Activated CD4-positive, alpha-beta memory T cell treated with anti-CD3 and anti-CD28 coated beads for 36 hours (primary cell): ENCODE measurements at regions of chr22 and their contacts with region 1.

Region 1: DNA sequence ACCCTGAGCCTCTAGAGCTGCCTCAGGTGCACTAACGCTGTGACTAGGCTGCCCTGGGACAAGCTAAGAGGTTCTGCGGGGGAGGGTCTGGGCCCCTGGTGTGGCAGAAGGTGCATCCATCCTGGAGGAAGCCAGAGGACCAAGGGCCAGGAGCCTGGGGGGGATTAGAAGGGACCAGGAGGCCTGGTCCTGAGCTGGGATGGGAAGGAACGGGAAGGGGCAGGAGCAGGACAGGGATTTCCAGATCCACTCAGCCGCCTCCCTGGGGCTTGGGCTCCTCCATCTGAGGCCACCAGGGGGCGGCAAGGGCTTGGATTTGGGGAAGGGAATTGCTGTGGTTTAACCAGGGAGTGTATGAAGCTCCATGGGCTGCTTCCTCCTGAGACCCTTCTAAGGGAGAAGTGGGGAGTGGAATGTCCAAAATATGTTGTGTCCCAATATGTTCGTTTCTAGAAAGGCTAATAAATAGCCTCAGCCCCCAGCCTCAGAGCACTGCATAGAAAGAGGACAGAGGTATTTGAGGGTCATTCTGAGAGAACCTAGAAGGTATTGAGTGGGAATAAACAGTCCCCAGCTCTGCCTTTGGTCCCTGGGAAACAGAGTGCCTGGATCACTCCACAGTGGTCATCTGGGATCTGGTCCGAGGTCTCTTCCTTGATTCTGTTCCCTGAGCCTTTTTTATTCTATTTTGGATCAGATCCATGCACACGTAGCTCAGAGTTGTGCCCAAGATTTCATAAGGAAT is 17.4 kb upstream of the PRAME start:
- DNase-seq: peak; percentile 44
- H3K4me3 Mint-ChIP-seq: no peak overlapping the region
- H3K27ac Mint-ChIP-seq: no peak overlapping the region
- H3K4me1 Mint-ChIP-seq: no peaks in the 10 kb centered on the region
- H3K27me3 Mint-ChIP-seq: peaks cover 1% of the 10 kb centered on the region

Region 2: DNA sequence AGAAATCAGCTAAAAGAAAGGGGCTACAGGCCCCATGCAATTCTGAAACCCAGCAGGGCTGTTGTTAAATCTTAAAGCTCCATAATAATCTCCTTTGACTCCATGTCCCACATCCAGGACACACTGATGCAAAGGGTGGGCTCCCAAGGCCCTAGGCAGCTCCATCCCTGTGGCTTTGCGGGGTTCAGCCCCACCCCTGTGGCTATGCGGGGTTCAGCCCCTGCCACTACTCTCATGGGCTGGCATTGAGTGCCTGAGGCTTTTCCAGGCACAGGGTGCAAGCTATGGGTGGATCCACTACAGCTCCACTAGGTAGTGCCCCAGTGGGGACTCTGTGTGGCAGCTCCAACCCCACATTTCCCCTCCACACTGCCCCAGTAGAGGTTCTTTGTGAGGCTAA is 47.6 kb before region 1 on chr22:
- CTCF ChIA-PET with region 1: no interaction called
- POLR2A ChIA-PET with region 1: no interaction called
- intact Hi-C with region 1: no loop called
- DNase-seq: no peak
- H3K4me3 Mint-ChIP-seq: no peak overlapping the region
- H3K27ac Mint-ChIP-seq: no peak overlapping the region
- H3K4me1 Mint-ChIP-seq: no peaks in the 10 kb centered on the region
- H3K27me3 Mint-ChIP-seq: peaks cover 5% of the 10 kb centered on the region

Region 3: GRCh38 chr22:22565981-22566380 is 10.4 kb before region 1 on chr22:
- CTCF ChIA-PET with region 1: interaction called, 15 read pairs
- POLR2A ChIA-PET with region 1: no interaction called
- intact Hi-C with region 1: no loop called
- DNase-seq: no peak
- H3K4me3 Mint-ChIP-seq: no peak overlapping the region
- H3K27ac Mint-ChIP-seq: no peak overlapping the region
- H3K4me1 Mint-ChIP-seq: no peaks in the 10 kb centered on the region
- H3K27me3 Mint-ChIP-seq: peaks cover 18% of the 10 kb centered on the region

Region 4: DNA sequence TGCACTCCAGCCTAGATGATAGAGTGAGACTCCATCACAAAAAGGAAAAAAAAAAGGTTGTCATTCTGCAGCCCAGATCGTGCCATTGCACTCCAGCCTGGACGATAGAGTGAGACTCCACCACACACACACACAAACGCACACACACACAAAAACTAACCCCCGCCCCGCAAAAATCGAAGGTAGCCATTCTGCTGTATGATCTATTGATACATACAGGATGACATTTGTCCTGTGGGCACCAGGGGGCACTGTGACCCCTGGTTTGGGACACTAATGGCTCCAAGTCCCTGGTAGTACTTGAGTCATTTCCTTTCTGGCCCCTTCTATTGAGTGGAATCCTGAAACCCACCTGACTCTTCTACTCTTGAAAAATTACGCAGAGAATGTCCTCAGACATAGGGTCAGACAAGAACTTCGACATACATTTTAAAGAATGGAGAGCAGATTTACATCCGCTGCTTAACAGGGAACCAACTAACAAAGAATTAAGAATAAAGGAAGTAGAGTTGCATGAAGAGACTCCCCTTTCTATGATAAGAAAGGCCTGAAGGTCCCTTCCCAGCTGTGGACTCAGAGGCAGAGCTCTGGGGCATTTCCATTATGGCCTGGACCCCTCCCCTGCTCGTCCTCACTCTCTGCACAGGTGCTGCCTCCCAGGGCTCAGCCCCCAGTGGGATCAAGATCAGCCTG is 17.7 kb after region 1 on chr22:
- CTCF ChIA-PET with region 1: interaction called, 74 read pairs
- POLR2A ChIA-PET with region 1: no interaction called
- intact Hi-C with region 1: no loop called
- DNase-seq: peak; percentile 70
- H3K4me3 Mint-ChIP-seq: no peak overlapping the region
- H3K27ac Mint-ChIP-seq: no peak overlapping the region
- H3K4me1 Mint-ChIP-seq: peaks cover 5% of the 10 kb centered on the region
- H3K27me3 Mint-ChIP-seq: peaks cover 4% of the 10 kb centered on the region

Region 5: DNA sequence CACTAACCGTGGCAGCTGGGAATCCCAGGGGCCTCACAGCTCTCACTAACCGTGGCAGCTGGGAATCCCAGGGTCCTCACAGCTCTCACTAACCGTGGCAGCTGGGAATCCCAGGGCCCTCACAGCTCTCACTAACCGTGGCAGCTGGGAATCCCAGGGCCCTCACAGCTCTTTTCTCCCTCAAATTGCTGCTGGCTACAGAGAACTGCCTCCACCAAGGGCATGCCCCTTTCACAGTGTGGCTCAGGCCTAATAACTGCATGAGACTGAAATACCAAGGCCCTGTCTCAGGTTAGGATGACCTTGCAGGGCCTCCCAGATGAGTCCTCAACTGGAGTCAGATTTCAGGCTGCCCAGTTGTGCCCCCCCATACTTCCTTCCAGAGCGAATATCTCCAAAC is 32.9 kb after region 1 on chr22:
- CTCF ChIA-PET with region 1: no interaction called
- POLR2A ChIA-PET with region 1: no interaction called
- intact Hi-C with region 1: no loop called
- DNase-seq: no peak
- H3K4me3 Mint-ChIP-seq: no peak overlapping the region
- H3K27ac Mint-ChIP-seq: no peak overlapping the region
- H3K4me1 Mint-ChIP-seq: no peaks in the 10 kb centered on the region
- H3K27me3 Mint-ChIP-seq: no peaks in the 10 kb centered on the region